Right lobe of liver (tissue), 6 donors: ENCODE measurements at regions of chr6 and their contacts with region 1.

Region 1: GRCh38 chr6:42043787-42044475 is 6.4 kb upstream of the TAF8 start:
- DNase-seq: peak; percentile 85 to 86 (median 86)
- ATAC-seq: peak; percentile 75 to 84 (median 77)
- H3K4me3 ChIP-seq: peak overlapping the region in 1 of 3 donors; percentile 11
- H3K27ac ChIP-seq: no peak overlapping the region
- H3K4me1 ChIP-seq: peaks cover 0 to 24% (median 8%) of the 10 kb centered on the region in 4 donors
- H3K27me3 ChIP-seq: no peaks in the 10 kb centered on the region
- CTCF ChIP-seq: peak; percentile 95 to 98 (median 97)
- POLR2A ChIP-seq: no peak

Region 2: GRCh38 chr6:41936073-41936837 is 107.7 kb before region 1 on chr6:
- intact Hi-C with region 1: loop called in 1 of 2 experiments (anchors 10 kb)
- DNase-seq: peak; percentile 74 to 85 (median 79)
- ATAC-seq: peak; percentile 90 to 95 (median 94)
- H3K4me3 ChIP-seq: no peak overlapping the region
- H3K27ac ChIP-seq: no peak overlapping the region
- H3K4me1 ChIP-seq: peaks cover 0 to 12% (median 0%) of the 10 kb centered on the region in 4 donors
- H3K27me3 ChIP-seq: no peaks in the 10 kb centered on the region
- CTCF ChIP-seq: peak; percentile 83 to 88 (median 86)
- POLR2A ChIP-seq: no peak